ENCODE measurements at regions of chr16 and their contacts with region 1.

Region 1: DNA sequence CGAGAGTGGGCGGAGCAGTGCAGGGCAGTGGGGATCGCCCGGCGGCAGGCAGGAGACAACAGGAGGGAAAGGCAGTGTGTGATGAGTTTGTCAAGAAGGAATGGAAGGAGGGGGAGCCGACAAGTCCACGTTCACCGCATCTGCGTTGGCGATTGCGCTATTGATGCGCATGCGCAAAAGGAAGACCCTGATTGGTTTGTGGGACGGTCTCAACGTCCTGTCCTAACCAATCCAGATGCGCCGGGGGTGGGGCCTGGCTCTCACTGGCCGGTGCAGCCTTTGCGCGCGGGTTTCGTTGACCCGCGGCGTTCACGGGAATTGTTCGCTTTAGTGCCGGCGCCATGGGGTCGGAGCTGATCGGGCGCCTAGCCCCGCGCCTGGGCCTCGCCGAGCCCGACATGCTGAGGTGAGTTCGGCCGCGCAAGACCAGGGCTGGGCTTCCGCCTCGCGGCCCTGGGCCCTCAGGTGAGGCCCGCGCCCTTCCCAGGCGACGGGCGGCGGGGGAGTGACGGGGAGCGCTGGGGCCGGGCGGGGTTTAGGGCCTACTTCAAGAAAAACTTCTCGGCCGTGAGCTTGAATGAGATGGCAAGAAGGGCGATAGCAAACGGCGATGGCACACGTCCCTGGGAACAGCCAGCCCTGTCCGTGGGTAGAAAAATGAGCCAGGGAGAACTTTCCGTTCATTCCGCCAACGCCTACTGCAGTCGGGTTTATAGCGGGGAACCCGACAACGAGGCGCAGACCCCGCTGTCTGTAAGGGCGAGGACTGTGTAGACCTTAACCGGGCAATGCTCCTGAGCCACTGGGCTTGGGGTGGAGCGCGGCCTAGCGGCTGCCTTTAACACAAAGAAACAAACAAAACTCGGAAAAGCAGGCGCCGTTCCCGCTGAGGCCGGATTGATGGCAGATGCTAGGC is at the start of gene ORC6:
- DNase-seq: peak; percentile 95
- ATAC-seq: peak; percentile 86
- H3K4me3 ChIP-seq: peak within 1 kb of the TSS; percentile 74
- H3K27ac ChIP-seq: peak within 1 kb of the TSS; percentile 90
- H3K4me1 ChIP-seq: no peaks in the 10 kb centered on the region; the same call in 1 of the 2 replicates
- H3K27me3 ChIP-seq: no peaks in the 10 kb centered on the region
- CTCF ChIP-seq: peak; percentile 50 to 68 (median 54)
- EP300 ChIP-seq: no peak
- POLR2A ChIP-seq: peak; percentile 87
- RAD21 ChIP-seq: peak; percentile 63
- polyA plus RNA-seq, gene ORC6: 25.7 to 37.8 TPM

Region 2: DNA sequence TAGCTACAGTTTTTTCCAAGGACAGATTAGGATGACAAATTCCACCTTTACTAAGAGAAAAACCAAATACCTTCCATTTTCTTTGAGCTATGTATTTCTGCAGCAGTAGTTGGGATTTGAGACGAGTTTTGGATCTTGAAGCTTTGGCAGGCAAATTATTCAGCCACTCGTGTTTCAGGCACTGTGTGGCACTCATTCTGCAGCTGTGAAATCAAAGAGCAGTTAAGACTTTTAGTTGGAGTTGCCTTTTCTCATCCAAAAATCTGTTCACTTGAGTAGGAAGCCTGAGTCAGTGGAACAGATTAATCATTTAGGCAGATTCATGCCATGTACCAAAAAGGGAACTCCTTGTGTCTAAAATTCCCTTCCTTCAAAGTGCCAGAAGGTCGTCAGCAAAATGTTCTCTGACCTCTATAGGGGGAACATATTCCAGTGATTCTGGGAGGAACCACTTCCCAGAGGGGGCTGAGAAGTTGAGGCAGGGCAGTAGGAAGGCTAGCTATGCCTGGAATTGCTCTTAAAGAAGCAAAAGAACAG is 19.9 kb after region 1 on chr16:
- CTCF ChIA-PET with region 1: interaction called, 15 read pairs
- POLR2A ChIA-PET with region 1: no interaction called
- RAD21 ChIA-PET with region 1: interaction called, 3 read pairs
- SMC1A ChIA-PET with region 1: interaction called, 11 read pairs
- in situ Hi-C with region 1: no loop called
- intact Hi-C with region 1: no loop called
- DNase-seq: no peak
- ATAC-seq: no peak
- H3K4me3 ChIP-seq: no peak overlapping the region
- H3K27ac ChIP-seq: no peak overlapping the region
- H3K4me1 ChIP-seq: peaks cover 10% of the 10 kb centered on the region
- H3K27me3 ChIP-seq: no peaks in the 10 kb centered on the region
- CTCF ChIP-seq: no peak
- EP300 ChIP-seq: no peak
- POLR2A ChIP-seq: no peak
- RAD21 ChIP-seq: no peak

Region 3: DNA sequence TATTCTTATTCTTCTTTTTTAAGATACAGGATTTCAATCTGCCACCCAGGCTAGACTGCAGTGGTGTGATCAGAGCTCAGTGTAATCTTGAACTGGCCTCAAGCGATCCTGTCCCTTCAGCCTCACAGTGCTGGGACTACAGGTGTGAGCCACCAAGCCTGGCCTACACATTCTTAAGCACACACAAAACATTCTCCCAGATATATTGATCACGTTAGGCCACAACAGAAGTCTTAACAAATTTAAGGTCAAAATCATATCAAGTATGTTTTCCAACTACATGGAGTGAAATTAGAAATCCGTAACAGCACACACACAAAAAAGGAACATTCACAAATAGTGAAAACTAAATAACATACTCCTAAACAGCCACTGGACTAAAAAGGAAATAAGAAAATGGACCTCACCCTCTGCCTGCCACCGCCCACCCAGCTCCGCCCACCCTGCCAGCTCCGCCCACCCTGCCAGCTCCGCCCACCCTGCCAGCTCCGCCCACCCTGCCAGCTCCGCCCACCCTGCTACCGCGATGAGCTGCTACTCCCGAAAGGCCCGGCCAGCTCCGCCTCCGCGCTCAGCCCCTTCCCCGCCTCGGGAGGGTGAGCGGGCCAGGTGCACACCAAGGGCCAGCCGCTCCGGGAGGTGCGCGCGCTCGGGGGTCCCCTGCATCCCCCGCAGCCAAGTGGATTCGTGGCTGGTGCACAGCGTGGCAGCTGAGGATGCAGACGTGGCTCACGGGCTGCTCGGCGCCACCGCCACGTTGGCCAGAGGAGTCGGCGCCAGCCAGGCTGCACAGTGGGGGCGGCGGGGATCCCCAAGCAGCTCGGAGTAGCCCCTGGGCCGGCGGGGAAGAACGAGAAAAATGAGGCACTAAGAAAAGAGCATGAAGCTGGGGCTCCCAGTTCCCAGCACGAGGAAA is 100.1 kb after region 1 on chr16:
- CTCF ChIA-PET with region 1: interaction called, 7 read pairs
- POLR2A ChIA-PET with region 1: interaction called, 7 read pairs
- RAD21 ChIA-PET with region 1: interaction called, 18 read pairs
- SMC1A ChIA-PET with region 1: interaction called, 12 read pairs
- in situ Hi-C with region 1: no loop called
- intact Hi-C with region 1: loop called (anchors 5 kb)
- DNase-seq: peak; percentile 57
- ATAC-seq: peak; percentile 93
- H3K4me3 ChIP-seq: peak overlapping the region; percentile 73
- H3K27ac ChIP-seq: peak overlapping the region; percentile 91
- H3K4me1 ChIP-seq: peaks cover 43% of the 10 kb centered on the region
- H3K27me3 ChIP-seq: no peaks in the 10 kb centered on the region
- CTCF ChIP-seq: no peak
- EP300 ChIP-seq: no peak
- POLR2A ChIP-seq: peak; percentile 96
- RAD21 ChIP-seq: no peak

Region 4: DNA sequence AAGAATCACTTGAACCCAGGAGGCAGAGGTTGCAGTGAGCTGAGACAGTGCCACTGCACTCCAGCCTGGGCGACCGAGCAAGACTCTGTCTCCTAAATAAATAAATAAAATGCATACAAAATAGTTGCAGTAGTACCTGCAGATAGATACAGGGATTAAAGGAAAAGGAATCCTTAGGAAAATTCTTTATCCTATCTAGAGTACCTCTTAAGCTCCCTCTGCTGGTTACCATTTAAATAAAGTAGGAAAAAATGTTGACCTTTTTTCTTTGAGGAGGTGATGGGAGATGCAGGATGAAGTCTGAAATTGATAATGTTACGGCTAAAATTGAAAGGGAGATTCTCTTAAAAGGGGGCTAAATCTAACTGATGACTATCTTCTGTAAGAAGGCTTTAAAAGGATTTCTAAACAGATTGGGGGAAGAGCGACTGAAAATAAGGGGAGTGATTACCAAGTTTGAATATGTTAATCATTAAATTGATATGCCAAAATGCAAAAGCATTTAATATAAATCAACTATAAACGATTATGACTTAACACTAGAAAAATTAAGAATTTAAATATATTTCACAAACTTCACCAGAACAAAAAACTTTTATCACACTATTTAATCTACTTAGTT is 111.9 kb after region 1 on chr16:
- CTCF ChIA-PET with region 1: interaction called, 44 read pairs
- POLR2A ChIA-PET with region 1: interaction called, 3 read pairs
- RAD21 ChIA-PET with region 1: interaction called, 8 read pairs
- SMC1A ChIA-PET with region 1: interaction called, 49 read pairs
- in situ Hi-C with region 1: no loop called
- intact Hi-C with region 1: no loop called
- DNase-seq: no peak
- ATAC-seq: no peak
- H3K4me3 ChIP-seq: no peak overlapping the region
- H3K27ac ChIP-seq: no peak overlapping the region
- H3K4me1 ChIP-seq: no peaks in the 10 kb centered on the region
- H3K27me3 ChIP-seq: no peaks in the 10 kb centered on the region
- CTCF ChIP-seq: peak in 1 of 3 experiments; percentile 6; a peak in 1 of 6 replicates
- EP300 ChIP-seq: no peak
- POLR2A ChIP-seq: no peak
- RAD21 ChIP-seq: peak; percentile 39; the same call in 1 of the 2 replicates

Region 5: DNA sequence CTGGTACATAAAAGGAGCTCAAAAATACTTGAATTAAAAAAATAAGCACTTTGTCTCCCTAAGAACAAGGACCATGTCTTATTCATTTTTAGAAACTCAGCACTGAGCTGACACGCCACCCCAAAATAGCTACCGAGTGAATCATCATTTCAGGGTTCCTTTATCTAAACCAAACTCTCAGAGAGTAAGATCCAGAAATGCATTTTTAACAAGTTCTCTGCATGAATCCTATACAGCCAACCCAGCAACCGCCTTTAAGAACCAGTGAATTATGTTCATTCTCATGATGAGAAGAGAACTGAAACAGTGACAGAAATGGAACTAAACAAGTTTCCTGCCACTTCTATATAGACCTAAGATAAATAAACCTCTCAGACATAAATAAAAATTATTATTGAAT is 132.6 kb after region 1 on chr16:
- CTCF ChIA-PET with region 1: interaction called, 4 read pairs
- POLR2A ChIA-PET with region 1: interaction called, 4 read pairs
- RAD21 ChIA-PET with region 1: interaction called, 4 read pairs
- SMC1A ChIA-PET with region 1: interaction called, 4 read pairs
- in situ Hi-C with region 1: loop called (anchors 10 kb)
- intact Hi-C with region 1: no loop called
- DNase-seq: peak; percentile 57
- ATAC-seq: peak; percentile 79
- H3K4me3 ChIP-seq: peak overlapping the region; percentile 54; the same call in 1 of the 2 replicates
- H3K27ac ChIP-seq: peak overlapping the region; percentile 88
- H3K4me1 ChIP-seq: peaks cover 26% of the 10 kb centered on the region
- H3K27me3 ChIP-seq: no peaks in the 10 kb centered on the region
- CTCF ChIP-seq: no peak
- EP300 ChIP-seq: peak in 1 of 2 experiments; percentile 69; a peak in 2 of 4 replicates
- POLR2A ChIP-seq: no peak
- RAD21 ChIP-seq: 0 out of 2 replicates have a peak, but pooled peaks have one; percentile 3

Region 6: DNA sequence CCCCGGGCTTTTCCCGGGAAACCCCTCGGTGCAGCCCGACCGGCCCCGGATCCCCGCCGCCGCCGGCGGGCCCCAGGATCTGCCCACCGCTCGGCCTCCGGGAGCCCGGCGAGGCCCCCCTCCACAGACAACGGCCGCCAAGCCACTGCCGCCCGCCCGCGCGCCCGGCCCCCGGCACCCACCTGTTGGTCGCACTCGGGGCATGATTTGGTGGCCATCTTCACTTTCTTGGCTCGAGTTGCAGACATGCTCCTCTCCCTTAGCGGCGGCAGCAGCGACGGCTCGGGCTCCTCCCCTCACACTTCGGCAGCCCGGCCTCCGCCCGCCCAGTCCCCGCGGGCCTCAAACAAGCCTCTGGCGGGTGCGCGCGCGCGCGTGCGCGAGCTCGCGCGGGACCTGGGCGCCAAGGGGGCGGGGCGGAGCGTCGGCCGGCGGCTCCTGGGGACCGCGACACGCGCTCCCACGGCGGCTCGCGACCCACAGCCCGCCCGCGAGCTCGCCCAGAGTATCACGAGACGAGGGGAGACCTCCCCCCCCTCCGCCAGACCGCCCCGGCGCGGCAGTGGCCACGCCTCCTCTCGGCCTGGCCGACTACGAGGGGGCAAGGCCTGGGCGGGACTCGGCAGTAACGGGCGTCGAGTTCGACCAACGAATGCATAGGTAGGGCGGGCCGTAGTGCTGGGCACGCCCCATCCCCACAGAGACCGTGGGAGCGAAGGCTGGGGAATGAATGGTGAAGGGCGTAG is 141.5 kb after region 1 on chr16 and contains the start of gene C16orf87:
- CTCF ChIA-PET with region 1: interaction called, 9 read pairs
- POLR2A ChIA-PET with region 1: interaction called, 8 read pairs
- RAD21 ChIA-PET with region 1: interaction called, 4 read pairs
- SMC1A ChIA-PET with region 1: interaction called, 11 read pairs
- in situ Hi-C with region 1: loop called (anchors 10 kb)
- intact Hi-C with region 1: loop called (anchors 1 kb)
- DNase-seq: peak; percentile 63
- ATAC-seq: peak; percentile 93
- H3K4me3 ChIP-seq: peak within 1 kb of the TSS; percentile 81
- H3K27ac ChIP-seq: peak within 1 kb of the TSS; percentile 72
- H3K4me1 ChIP-seq: peaks cover 6% of the 10 kb centered on the region; the same call in 1 of the 2 replicates
- H3K27me3 ChIP-seq: no peaks in the 10 kb centered on the region
- CTCF ChIP-seq: no peak
- EP300 ChIP-seq: 0 out of 4 replicates have a peak, but pooled peaks of 1 of the 2 experiments have one; percentile 16
- POLR2A ChIP-seq: peak; percentile 81
- RAD21 ChIP-seq: no peak
- polyA plus RNA-seq, gene C16orf87: 49.0 to 51.8 TPM

Region 7: DNA sequence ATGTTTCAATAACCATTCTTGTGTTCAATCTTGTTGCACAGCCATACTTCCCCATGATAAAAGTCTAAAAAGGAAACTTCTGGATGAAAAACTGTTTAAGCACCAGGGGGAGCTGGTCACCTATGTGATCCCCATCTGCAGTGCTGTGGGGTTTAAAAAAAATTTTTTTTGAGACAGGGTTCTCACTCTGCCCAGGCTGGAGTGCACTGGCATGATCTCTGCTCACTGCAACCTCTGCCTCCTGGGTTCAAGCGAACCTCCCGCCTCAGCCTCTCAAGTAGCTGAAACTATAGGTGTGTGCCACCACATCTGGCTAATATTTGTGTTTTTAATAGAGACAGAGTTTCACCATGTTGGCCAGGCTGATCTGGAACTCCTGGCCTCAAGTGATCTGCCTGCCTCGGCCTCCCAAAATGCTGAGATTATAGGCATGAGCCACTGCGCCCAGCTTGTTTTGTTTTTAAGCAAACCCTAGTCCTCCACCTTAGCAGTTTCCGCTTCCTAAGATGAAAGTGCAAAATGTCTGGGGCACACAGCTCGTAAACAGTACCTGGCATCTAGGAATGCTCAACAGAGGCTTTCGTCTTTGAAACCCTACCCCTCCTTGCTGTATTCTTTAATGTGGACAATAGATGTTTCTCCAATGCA is 258.4 kb after region 1 on chr16:
- CTCF ChIA-PET with region 1: no interaction called
- POLR2A ChIA-PET with region 1: no interaction called
- RAD21 ChIA-PET with region 1: no interaction called
- SMC1A ChIA-PET with region 1: no interaction called
- in situ Hi-C with region 1: no loop called
- intact Hi-C with region 1: no loop called
- DNase-seq: peak; percentile 32
- ATAC-seq: peak; percentile 90
- H3K4me3 ChIP-seq: no peak overlapping the region
- H3K27ac ChIP-seq: no peak overlapping the region
- H3K4me1 ChIP-seq: peaks cover 5% of the 10 kb centered on the region; the same call in 1 of the 2 replicates
- H3K27me3 ChIP-seq: no peaks in the 10 kb centered on the region
- CTCF ChIP-seq: peak; percentile 58 to 77 (median 59); a peak in 5 of 6 replicates
- EP300 ChIP-seq: no peak
- POLR2A ChIP-seq: no peak
- RAD21 ChIP-seq: peak; percentile 95

Region 8: DNA sequence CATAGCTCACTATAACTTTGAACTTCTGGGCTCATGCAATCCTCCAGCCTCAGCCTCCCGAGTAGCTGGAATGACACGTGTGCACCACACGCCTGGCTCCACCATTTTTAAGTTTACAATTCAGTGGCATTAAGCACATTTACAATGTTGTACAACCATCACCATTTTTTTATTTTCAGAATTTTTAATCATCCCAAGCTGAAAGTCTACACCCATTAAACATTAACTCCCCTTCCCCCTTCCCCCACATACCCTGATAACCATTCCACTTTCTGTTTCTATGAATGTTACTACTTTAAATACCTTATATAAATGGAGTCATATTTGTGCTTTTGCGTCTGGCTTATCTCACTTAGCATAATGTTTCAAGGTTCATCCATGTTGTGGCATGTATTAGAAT is 436.1 kb after region 1 on chr16:
- CTCF ChIA-PET with region 1: no interaction called
- POLR2A ChIA-PET with region 1: no interaction called
- RAD21 ChIA-PET with region 1: no interaction called
- SMC1A ChIA-PET with region 1: no interaction called
- in situ Hi-C with region 1: no loop called
- intact Hi-C with region 1: loop called (anchors 5 kb)
- DNase-seq: no peak
- ATAC-seq: no peak
- H3K4me3 ChIP-seq: no peak overlapping the region
- H3K27ac ChIP-seq: no peak overlapping the region
- H3K4me1 ChIP-seq: no peaks in the 10 kb centered on the region
- H3K27me3 ChIP-seq: no peaks in the 10 kb centered on the region
- CTCF ChIP-seq: no peak
- EP300 ChIP-seq: no peak
- POLR2A ChIP-seq: no peak
- RAD21 ChIP-seq: no peak